Esophagus muscularis mucosa (tissue), 4 donors: ENCODE measurements at regions of chr9 and their contacts with region 1.

Region 1: GRCh38 chr9:114291064-114291474 is 31.8 kb upstream of the ORM1 start:
- DNase-seq: no peak
- H3K4me3 ChIP-seq: no peak overlapping the region
- H3K27ac ChIP-seq: no peak overlapping the region
- H3K4me1 ChIP-seq: no peaks in the 10 kb centered on the region
- H3K27me3 ChIP-seq: peaks cover 0 to 13% (median 0%) of the 10 kb centered on the region in 4 donors
- CTCF ChIP-seq: peak; percentile 86 to 98 (median 92)
- EP300 ChIP-seq: no peak
- POLR2A ChIP-seq: no peak

Region 2: DNA sequence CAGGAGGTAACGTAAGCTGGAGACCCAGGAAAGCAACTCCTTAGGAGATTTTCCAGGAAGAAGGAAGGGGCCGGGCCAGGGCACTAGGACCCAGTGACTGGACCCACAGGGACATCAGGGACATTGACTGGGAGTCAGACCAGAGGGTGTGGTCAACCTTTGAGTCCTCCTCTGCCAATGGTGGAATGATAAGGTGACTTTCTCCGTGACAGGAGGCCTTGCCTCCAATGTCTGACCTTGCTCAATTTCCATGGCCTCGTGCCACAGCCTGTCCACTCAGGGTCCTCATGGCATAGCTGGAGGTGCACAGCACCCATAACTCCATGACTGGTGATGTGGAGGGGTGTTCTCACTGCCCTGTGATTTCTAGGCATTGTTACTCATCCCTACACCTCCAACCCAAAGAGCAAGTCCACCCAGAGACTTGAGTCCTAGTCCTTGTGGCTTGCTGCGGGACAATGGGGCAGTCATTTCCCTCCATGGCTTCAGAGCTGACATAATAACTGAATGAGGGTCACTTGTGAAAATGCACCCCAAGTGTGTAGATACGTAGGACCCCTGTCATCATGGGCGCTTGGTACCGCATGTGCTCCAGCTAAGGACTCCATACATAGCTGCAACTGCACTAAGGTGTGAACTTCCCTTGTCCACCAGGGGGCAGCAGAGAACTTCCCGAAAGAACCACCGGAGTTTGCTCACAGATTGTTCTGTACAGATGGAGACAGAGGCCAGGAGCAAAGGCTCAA is 208.9 kb before region 1 on chr9:
- intact Hi-C with region 1: loop called (anchors 1 kb)
- DNase-seq: peak; percentile 98
- H3K4me3 ChIP-seq: no peak overlapping the region
- H3K27ac ChIP-seq: no peak overlapping the region
- H3K4me1 ChIP-seq: peaks cover 0 to 8% (median 3%) of the 10 kb centered on the region in 4 donors
- H3K27me3 ChIP-seq: peaks cover 0 to 14% (median 0%) of the 10 kb centered on the region in 4 donors
- CTCF ChIP-seq: peak; percentile 75 to 96 (median 86)
- EP300 ChIP-seq: no peak
- POLR2A ChIP-seq: no peak

Region 3: GRCh38 chr9:114108016-114108833 is 182.8 kb before region 1 on chr9:
- intact Hi-C with region 1: loop called (anchors 2 kb)
- DNase-seq: no peak
- H3K4me3 ChIP-seq: no peak overlapping the region
- H3K27ac ChIP-seq: no peak overlapping the region
- H3K4me1 ChIP-seq: peaks cover 2 to 13% (median 5%) of the 10 kb centered on the region in 4 donors
- H3K27me3 ChIP-seq: peaks cover 0 to 12% (median 0%) of the 10 kb centered on the region in 4 donors
- CTCF ChIP-seq: peak; percentile 76 to 90 (median 79)
- EP300 ChIP-seq: no peak
- POLR2A ChIP-seq: no peak

Region 4: GRCh38 chr9:115164511-115164974 is 873.5 kb after region 1 on chr9:
- intact Hi-C with region 1: no loop called
- DNase-seq: no peak
- H3K4me3 ChIP-seq: no peak overlapping the region
- H3K27ac ChIP-seq: no peak overlapping the region
- H3K4me1 ChIP-seq: peaks cover 0 to 17% (median 7%) of the 10 kb centered on the region in 4 donors
- H3K27me3 ChIP-seq: no peaks in the 10 kb centered on the region
- CTCF ChIP-seq: no peak
- EP300 ChIP-seq: no peak
- POLR2A ChIP-seq: no peak